Activated CD4-positive, alpha-beta T cell treated with anti-CD3 and anti-CD28 coated beads, Interleukin-2, amount 10 ng/mL, durations not matched to agents 24 days and 14 days (primary cell): ENCODE measurements at regions of chr12 and their contacts with region 1.

Region 1: GRCh38 chr12:27014085-27014858 is at the start of gene TM7SF3:
- DNase-seq: peak; percentile 99
- H3K4me3 Mint-ChIP-seq: peak within 1 kb of the TSS; percentile 94
- H3K27ac Mint-ChIP-seq: peak within 1 kb of the TSS; percentile 95
- H3K4me1 Mint-ChIP-seq: peaks cover 47% of the 10 kb centered on the region
- H3K27me3 Mint-ChIP-seq: no peaks in the 10 kb centered on the region
- total RNA-seq, gene TM7SF3: 44.0 and 51.6 TPM in 2 replicates

Region 2: DNA sequence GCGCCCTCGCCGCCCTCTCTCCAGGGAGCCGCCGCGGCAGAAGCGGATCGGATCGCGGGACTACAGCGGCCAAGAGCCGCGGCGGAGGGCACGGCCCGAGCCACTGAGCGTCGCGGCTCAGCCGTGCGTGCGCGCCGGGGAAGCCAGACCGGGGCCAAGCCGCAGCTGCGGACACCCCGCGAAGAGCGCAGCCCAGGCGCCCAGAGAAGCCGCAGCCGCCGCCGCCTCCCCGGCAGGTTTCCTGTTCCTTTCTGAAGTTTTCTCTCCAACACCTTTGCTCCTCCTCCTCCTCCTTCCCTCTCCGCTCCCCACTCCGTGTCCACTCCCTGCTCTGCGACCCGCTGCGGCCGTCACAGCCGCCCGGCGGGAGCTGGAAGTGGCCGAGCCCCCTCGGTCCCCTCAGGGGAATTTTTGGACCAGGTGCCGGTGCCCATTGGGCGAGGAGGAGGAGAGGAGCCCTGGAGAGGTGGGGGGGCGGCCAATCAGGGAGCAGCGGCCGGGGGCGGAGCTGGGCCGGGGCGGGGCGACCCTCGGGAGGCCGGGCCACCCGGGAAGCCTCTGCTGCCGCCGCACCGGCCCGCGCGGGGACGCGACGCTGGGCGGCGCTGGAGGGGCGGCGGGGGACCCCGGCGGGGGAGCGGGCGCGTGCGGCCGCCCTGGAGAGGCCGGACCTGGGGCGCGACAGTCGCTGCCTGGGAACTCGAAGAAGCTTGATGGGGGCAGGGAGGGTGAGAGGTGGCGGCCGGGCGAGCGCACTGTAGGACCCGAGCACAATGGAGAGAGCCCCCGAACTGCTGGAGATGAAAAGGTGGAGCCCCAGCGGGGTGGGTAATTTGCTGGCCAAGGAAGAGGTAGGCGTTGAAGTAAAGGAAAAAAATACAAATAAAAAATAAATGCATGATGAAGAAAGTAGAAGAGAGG is 181.2 kb before region 1 on chr12 and contains the start of gene ITPR2:
- intact Hi-C with region 1: loop called (anchors 2 kb)
- DNase-seq: peak; percentile 97
- H3K4me3 Mint-ChIP-seq: peak within 1 kb of the TSS; percentile 100
- H3K27ac Mint-ChIP-seq: peak within 1 kb of the TSS; percentile 99
- H3K4me1 Mint-ChIP-seq: peaks cover 41% of the 10 kb centered on the region
- H3K27me3 Mint-ChIP-seq: no peaks in the 10 kb centered on the region
- total RNA-seq, gene ITPR2: 46.0 and 46.2 TPM in 2 replicates

Region 3: GRCh38 chr12:26937875-26938700 is 76.2 kb before region 1 on chr12 and contains the starts of genes FGFR1OP2 and INTS13:
- intact Hi-C with region 1: loop called (anchors 1 kb)
- DNase-seq: peak; percentile 99
- H3K4me3 Mint-ChIP-seq: peak within 1 kb of the TSS; percentile 94
- H3K27ac Mint-ChIP-seq: peak within 1 kb of the TSS; percentile 97
- H3K4me1 Mint-ChIP-seq: peaks cover 55% of the 10 kb centered on the region
- H3K27me3 Mint-ChIP-seq: no peaks in the 10 kb centered on the region
- total RNA-seq, gene FGFR1OP2: 45.7 and 46.7 TPM in 2 replicates
- total RNA-seq, gene INTS13: 49.7 and 51.3 TPM in 2 replicates

Region 4: GRCh38 chr12:27142101-27142721 is 127.9 kb after region 1 on chr12:
- intact Hi-C with region 1: loop called (anchors 1 kb)
- DNase-seq: peak; percentile 81
- H3K4me3 Mint-ChIP-seq: no peak overlapping the region
- H3K27ac Mint-ChIP-seq: peak overlapping the region; percentile 1
- H3K4me1 Mint-ChIP-seq: peaks cover 17% of the 10 kb centered on the region
- H3K27me3 Mint-ChIP-seq: peaks cover 2% of the 10 kb centered on the region

Region 5: DNA sequence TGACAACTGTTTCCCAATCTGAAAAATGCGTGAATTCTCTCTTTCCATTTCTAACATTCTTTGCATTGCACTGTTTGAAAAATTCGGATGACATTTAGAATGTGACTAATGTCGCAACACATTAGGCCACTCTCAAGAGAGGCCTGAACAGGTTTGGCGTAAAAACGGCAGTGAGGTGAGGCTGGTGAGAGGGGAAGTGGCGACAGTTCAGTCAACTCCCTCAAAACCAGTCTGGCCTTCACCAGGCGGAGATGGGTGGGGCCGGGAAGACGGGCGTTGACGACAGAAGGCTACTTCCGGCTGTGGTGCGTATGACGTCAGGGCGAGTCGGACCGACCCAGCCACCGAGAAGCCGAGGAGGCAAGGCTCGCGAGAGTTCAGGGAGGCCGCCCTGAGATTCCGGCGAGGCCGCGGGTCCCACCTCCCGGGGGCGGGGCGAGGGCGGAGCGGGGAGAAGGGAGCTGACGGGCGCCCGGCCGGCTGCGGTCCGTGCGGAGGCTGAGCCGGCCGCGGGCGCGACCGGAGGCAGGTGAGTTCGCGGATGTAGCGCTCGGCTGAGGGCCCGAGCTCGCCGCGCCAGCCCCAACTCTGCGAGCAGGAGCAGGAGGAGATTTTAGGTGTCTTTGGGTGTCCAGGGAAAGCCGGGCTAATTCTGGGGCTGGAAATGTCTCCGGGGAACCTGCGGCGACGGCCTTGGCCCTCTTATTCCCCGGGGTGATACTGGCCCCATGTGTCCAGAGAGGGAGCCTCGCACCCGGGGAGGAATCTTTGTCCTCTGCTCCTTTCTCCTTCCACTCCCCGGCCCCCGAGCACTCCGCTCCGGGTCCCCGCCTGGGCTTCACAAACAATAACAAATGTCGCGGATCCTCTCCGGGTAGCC is 229.8 kb after region 1 on chr12 and contains the start of gene STK38L:
- intact Hi-C with region 1: loop called (anchors 1 kb)
- DNase-seq: peak; percentile 99
- H3K4me3 Mint-ChIP-seq: peak within 1 kb of the TSS; percentile 96
- H3K27ac Mint-ChIP-seq: peak within 1 kb of the TSS; percentile 98
- H3K4me1 Mint-ChIP-seq: peaks cover 31% of the 10 kb centered on the region
- H3K27me3 Mint-ChIP-seq: no peaks in the 10 kb centered on the region
- total RNA-seq, gene STK38L: 22.8 and 23.0 TPM in 2 replicates

Region 6: GRCh38 chr12:27523642-27524493 is 509.6 kb after region 1 on chr12 and contains the start of gene PPFIBP1:
- intact Hi-C with region 1: loop called (anchors 5 kb)
- DNase-seq: peak; percentile 96
- H3K4me3 Mint-ChIP-seq: peak within 1 kb of the TSS; percentile 96
- H3K27ac Mint-ChIP-seq: peak within 1 kb of the TSS; percentile 91
- H3K4me1 Mint-ChIP-seq: peaks cover 34% of the 10 kb centered on the region
- H3K27me3 Mint-ChIP-seq: peaks cover 42% of the 10 kb centered on the region
- total RNA-seq, gene PPFIBP1: 29.0 and 32.0 TPM in 2 replicates